ENCODE measurements at regions of chr16 and their contacts with region 1.

Region 1: DNA sequence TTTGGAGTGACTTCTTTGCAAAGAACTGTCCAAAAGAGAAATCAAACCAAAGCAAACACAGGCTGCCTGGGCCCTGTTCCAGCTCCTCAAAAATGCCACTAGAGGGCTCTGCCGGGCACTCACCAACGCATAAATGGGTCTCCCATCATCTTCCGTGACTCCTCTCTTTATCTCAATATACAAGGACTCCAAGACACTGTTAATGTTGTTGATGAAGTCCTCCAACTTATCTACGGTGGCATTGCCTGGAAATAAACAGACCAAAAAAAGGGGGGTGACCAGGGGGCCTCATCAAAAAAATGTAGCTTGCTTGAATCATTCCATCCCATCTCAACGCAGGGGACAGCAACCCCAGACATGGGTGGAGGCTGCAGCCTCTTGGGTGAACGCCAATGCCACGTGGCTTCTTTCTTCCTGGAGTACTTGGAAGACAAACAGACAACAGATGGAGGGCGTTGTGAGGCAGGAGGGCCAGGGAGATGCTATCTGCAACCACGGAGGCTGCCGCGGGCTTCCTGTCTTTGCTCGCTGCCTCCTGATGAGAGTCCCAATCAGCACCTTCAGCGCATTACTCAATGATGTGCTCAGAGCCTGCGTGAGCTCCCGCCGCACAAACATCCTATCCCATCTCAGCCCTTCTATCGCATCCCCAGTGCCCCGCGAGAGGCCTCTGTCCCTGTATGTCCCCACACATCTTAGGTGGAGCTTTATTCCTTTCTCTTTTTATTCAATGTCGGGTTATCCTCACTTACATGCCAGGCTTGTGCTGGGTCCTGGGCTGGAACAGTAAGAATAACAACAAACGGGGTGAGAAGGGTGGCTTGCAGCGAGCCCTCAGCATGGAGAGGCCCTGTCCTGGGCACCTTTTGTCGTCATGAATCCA is 32.0 kb downstream of the KDM8 start:
- DNase-seq: peak; percentile 80 to 94 (median 90)
- H3K4me3 ChIP-seq: no peak overlapping the region
- H3K27ac ChIP-seq: peak overlapping the region in 4 of 5 donors; percentile 14 to 81 (median 47)
- H3K4me1 ChIP-seq: peaks cover 8 to 38% of the 10 kb centered on the region in 2 donors
- H3K27me3 ChIP-seq: no peaks in the 10 kb centered on the region
- CTCF ChIP-seq: peak; percentile 63 to 91 (median 86)
- POLR2A ChIP-seq: peak in 1 of 2 donors; percentile 11

Region 2: DNA sequence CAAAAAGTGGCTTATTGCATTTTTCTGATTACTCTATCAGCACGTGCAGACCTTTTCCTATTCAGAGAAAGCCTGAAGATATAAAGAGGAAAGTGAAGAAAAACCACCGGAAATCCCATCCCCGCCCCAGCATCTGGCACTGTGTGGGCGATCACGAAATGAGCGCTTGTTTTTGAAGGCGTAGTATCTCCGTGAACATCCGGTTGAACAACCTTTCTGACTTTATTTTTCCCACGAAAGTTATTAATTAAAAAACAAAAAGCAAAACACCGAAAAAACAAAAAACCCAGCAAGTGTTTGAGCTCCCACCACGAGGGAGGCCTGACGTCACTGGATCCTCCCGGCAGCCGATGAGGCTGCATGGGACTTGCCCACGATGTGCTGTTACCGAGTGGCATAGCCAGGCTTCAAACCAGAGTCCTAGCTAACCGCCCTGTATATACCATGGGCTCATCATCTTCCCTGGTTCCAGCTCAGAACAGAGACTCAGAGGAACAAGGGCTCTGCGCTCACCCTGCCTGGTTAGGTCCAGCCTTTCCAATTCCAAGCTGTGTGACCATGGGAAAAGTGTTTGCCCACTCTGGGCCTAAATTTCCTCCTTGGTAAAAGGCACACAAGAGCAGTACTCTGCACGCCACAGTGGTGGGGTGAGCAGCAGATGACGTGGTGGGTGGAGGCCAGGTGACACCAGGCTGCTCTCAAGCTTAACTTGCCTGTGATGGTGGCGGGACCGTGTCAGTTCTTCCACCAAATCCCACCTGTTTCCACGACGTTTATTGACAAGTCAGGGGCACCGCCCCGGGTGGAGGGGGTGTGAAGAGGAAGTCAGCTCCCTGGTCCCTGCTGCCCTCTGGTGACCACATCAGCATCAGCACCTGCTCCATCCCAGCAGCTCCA is 132.4 kb after region 1 on chr16:
- intact Hi-C with region 1: loop called (anchors 5 kb)
- DNase-seq: peak; percentile 72 to 85 (median 78)
- H3K4me3 ChIP-seq: peak overlapping the region in 1 of 4 donors; percentile 1
- H3K27ac ChIP-seq: peak overlapping the region in 4 of 5 donors; percentile 10 to 61 (median 48)
- H3K4me1 ChIP-seq: peaks cover 0 to 12% of the 10 kb centered on the region in 2 donors
- H3K27me3 ChIP-seq: no peaks in the 10 kb centered on the region
- CTCF ChIP-seq: peak; percentile 47 to 83 (median 73)
- POLR2A ChIP-seq: no peak

Measured in adrenal gland (tissue), 19 donors.